Ascending aorta (tissue), 2 donors: ENCODE measurements at regions of chr6 and their contacts with region 1.

Region 1: DNA sequence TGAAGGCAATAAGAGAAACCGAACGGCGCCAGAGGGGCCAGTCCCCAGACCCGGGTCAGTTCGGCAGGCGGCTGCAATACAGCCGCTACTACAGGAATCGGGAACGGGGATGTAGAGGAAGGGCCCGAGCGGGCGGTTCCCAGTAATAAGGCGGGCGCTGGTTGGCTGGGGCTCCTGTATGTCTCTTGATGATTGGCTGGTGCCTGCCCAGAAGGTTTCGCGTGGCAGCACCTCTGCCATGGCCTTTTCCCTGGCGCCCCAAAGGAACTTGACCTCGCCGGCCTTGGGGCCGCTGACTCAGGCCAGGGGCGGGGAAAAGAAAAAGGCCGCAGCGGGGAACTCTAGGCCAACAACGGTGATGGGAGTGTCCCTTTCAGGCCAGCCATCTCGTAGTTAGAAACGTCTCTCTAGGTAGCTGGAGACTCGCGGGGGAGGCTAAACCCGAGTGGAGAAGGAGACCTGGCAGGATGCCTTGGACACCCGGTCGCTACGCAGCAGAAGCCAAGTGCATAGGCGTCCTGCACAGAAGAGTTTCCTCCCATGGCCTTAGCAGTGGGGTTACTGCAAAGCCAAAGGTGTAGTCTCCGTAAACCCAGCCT is at the start of gene IBTK:
- DNase-seq: peak; percentile 72 to 97
- H3K4me3 ChIP-seq: peak within 1 kb of the TSS; percentile 92
- H3K27ac ChIP-seq: peak within 1 kb of the TSS; percentile 96
- H3K4me1 ChIP-seq: peaks cover 0 to 9% of the 10 kb centered on the region in 2 donors
- H3K27me3 ChIP-seq: no peaks in the 10 kb centered on the region
- CTCF ChIP-seq: no peak
- total RNA-seq, gene IBTK: 8.8 TPM

Region 2: GRCh38 chr6:82363351-82364086 is 115.8 kb after region 1 on chr6 and contains the start of gene TPBG:
- intact Hi-C with region 1: loop called (anchors 5 kb)
- DNase-seq: peak in 1 of 2 donors; percentile 74
- H3K4me3 ChIP-seq: peak within 1 kb of the TSS; percentile 63 to 93
- H3K27ac ChIP-seq: peak within 1 kb of the TSS; percentile 89 to 93
- H3K4me1 ChIP-seq: peaks cover 4 to 9% of the 10 kb centered on the region in 2 donors
- H3K27me3 ChIP-seq: no peaks in the 10 kb centered on the region
- CTCF ChIP-seq: peak in 1 of 3 experiments; percentile 42
- total RNA-seq, gene TPBG: 60.1 TPM

Region 3: GRCh38 chr6:83057705-83058321 is 810.1 kb after region 1 on chr6:
- intact Hi-C with region 1: loop called (anchors 2 kb)
- DNase-seq: no peak
- H3K4me3 ChIP-seq: no peak overlapping the region
- H3K27ac ChIP-seq: no peak overlapping the region
- H3K4me1 ChIP-seq: no peaks in the 10 kb centered on the region
- H3K27me3 ChIP-seq: no peaks in the 10 kb centered on the region
- CTCF ChIP-seq: peak in 2 of 3 experiments; percentile 47 to 58